ENCODE measurements at regions of chr19 and their contacts with region 1.

Region 1: GRCh38 chr19:6340493-6341201 is 7.2 kb upstream of the ACER1 start:
- DNase-seq: no peak
- H3K4me3 ChIP-seq: no peak overlapping the region
- H3K27ac ChIP-seq: no peak overlapping the region
- H3K4me1 ChIP-seq: no peaks in the 10 kb centered on the region
- H3K27me3 ChIP-seq: no peaks in the 10 kb centered on the region
- CTCF ChIP-seq: no peak

Region 2: DNA sequence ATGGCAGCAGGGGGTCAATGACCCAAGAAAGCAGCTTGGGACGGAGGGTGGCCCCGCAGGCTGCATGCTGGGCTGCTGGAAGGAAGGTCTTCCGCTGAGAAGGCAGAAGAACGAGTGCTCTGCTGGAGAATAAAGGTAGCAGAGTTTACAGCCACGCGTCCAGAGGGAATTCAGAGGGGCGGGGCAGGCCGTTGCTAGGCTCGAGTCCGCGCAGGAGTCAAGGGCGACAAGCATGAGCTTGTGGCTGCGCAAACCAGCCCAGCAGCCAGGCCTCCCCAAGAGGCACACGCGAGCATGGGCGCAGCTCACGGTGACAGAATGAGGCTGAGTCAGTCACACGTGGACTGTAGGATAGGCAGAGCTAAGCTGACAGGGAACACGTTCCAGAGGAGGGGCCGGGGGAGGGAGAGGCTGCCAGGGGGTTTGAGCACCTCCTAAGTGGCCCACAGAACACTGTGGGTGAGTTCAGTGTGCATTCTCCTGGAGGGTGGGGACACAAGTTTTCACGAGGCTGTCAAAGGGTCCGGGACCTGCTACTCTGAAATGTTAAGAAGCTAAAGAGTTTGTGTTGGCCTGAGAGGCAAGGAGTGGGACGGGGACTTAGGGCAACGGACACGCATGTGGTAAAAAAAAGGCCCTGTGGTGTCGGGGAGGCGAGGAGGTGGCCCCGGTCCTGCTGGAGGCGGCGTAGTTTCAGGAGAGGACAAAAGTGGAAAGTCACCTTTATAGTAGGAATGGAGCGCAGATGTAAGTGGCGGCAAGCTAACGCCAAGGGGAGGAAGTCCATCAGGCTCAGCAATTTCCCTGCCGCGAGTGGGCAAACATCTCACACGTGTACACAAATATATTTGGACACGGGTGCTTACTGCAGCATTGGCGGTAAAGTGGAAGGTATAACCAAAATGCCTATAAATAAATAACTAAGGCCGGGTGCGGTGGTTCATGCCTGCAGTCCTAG is 248.0 kb before region 1 on chr19:
- CTCF ChIA-PET with region 1: no interaction called
- POLR2A ChIA-PET with region 1: interaction called, 13 read pairs
- intact Hi-C with region 1: no loop called
- DNase-seq: peak; percentile 83 to 85
- H3K4me3 ChIP-seq: peak overlapping the region; percentile 47; the same call in 1 of the 2 replicates
- H3K27ac ChIP-seq: peak overlapping the region; percentile 39; the same call in 1 of the 2 replicates
- H3K4me1 ChIP-seq: peaks cover 37% of the 10 kb centered on the region
- H3K27me3 ChIP-seq: no peaks in the 10 kb centered on the region
- CTCF ChIP-seq: no peak

Region 3: DNA sequence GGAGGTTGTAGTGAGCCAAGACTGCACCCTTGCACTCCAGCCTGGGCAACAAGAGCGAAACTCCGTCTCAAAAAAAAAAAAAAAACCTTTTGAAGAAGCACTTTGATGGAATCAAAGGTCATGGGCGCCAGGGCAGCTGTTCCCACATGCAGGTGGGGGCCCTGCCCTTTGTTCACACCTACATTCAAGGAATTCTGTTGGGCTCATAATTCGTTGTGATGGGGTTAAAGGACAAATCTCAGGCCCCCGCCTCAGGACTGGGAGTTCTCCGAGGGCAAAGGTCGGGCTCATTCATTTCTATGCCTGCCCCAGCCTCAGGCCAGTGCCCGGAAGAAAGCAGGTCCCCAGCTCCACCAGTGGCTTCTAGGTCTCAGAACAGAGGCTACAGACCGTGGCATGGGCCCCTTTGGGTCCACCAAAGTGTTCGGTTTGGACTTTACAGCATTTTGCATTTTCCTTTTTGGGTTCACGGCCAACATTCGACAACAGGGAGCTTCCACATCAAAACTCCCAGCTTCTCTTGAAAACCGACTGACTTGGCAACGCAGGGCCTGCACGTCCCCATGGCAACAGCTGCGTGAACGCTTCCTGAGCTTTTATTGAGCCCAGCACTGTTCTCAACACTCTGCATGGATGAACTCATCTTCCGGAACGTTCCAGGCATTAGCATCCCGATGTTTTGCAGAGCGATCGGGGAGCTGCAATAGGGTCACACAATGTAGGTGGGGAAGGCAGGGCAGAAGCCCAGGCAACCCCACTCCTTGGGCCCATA is 62.4 kb after region 1 on chr19:
- CTCF ChIA-PET with region 1: no interaction called
- POLR2A ChIA-PET with region 1: no interaction called
- intact Hi-C with region 1: no loop called
- DNase-seq: no peak
- H3K4me3 ChIP-seq: no peak overlapping the region
- H3K27ac ChIP-seq: no peak overlapping the region
- H3K4me1 ChIP-seq: no peaks in the 10 kb centered on the region
- H3K27me3 ChIP-seq: no peaks in the 10 kb centered on the region
- CTCF ChIP-seq: no peak